ENCODE measurements at regions of chr1 and their contacts with region 1.

Region 1: DNA sequence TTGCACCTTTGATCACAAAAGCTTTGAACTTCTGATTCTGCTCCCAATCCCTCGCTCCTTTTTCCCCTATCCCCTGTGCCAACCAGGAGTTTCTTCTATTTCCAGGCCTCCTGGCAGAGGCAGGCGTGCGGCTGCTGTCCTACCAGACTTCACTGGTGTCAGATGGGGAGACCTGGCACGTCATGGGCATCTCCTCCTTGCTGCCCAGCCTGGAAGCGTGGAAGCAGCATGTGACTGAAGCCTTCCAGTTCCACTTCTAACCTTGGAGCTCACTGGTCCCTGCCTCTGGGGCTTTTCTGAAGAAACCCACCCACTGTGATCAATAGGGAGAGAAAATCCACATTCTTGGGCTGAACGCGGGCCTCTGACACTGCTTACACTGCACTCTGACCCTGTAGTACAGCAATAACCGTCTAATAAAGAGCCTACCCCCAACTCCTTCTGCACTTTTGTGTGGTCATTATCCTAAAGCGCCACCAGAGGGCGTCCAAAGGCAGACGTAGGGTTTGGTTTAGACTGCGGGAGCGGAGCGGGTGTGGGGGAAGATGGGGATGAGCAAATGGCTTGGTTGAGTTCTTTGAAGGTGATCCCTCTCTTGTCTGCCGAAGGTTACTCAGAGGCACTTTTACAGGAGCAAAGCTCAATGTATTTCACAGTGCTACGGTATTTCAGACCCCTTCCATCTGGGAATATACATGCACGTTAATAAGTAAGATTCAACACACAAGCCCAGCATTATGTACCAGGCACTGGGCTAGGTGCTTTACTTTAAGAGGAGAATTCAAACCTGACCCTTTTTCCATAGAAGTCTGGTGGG is 24.7 kb downstream of the HMGCS2 start:
- H3K4me3 Mint-ChIP-seq: no peak overlapping the region
- H3K27ac Mint-ChIP-seq: no peak overlapping the region
- H3K4me1 Mint-ChIP-seq: peaks cover 16% of the 10 kb centered on the region
- H3K27me3 Mint-ChIP-seq: no peaks in the 10 kb centered on the region

Region 2: DNA sequence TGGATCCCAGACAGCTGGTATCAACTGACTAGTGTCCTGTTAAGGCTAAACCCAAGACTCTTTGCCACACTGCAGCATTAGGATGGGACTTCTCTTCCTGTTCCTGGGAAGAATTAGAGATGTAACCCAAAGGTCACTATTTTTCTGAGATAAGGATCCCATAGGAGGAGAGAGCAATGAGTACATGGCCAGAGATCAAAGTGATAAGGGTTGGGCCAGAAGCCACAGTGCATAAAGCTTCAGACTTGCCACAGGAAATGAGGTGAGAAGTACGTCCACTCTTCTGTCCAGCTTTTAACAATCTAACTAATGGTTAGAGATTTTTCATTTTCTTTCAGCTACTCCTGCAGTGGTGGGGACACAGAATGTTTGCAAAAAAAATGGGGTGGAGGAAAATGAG is 237.0 kb before region 1 on chr1 and contains the start of gene HSD3B1:
- intact Hi-C with region 1: no loop called
- H3K4me3 Mint-ChIP-seq: no peak within 1 kb of the TSS
- H3K27ac Mint-ChIP-seq: no peak within 1 kb of the TSS
- H3K4me1 Mint-ChIP-seq: no peaks in the 10 kb centered on the region
- H3K27me3 Mint-ChIP-seq: peaks cover 3% of the 10 kb centered on the region

Region 3: DNA sequence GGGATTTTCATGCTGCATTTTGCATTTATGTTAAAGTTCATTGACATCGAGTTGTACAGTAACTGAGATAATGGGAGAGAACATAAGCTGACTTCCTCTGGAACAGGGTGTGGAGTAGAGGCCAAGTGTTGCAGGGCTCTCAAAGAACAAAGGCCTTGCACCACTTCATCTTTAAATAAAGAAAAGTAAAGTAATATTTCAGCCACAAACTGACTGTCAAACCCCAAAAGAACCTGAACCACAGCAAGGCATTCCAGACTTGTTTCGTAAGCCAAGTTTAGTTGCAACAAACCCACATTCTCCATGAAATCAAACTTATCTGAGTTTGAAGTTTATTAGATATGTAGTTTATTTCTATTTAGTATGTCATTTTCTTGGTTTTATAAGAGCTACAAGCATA is 43.8 kb after region 1 on chr1:
- intact Hi-C with region 1: loop called (anchors 1 kb)
- H3K4me3 Mint-ChIP-seq: no peak overlapping the region
- H3K27ac Mint-ChIP-seq: no peak overlapping the region
- H3K4me1 Mint-ChIP-seq: peaks cover 46% of the 10 kb centered on the region
- H3K27me3 Mint-ChIP-seq: no peaks in the 10 kb centered on the region

Region 4: GRCh38 chr1:119808972-119809550 is 65.1 kb after region 1 on chr1:
- intact Hi-C with region 1: loop called (anchors 2 kb)
- H3K4me3 Mint-ChIP-seq: no peak overlapping the region
- H3K27ac Mint-ChIP-seq: no peak overlapping the region
- H3K4me1 Mint-ChIP-seq: no peaks in the 10 kb centered on the region
- H3K27me3 Mint-ChIP-seq: peaks cover 7% of the 10 kb centered on the region

Measured in dendritic cell treated with granulocyte-macrophage colony-stimulating factor and Interleukin-4, amounts not matched to agents 40 ng/mL and 50 ng/mL, for 4 days (primary cell).